ENCODE measurements at regions of chr7 and their contacts with region 1.

Region 1: DNA sequence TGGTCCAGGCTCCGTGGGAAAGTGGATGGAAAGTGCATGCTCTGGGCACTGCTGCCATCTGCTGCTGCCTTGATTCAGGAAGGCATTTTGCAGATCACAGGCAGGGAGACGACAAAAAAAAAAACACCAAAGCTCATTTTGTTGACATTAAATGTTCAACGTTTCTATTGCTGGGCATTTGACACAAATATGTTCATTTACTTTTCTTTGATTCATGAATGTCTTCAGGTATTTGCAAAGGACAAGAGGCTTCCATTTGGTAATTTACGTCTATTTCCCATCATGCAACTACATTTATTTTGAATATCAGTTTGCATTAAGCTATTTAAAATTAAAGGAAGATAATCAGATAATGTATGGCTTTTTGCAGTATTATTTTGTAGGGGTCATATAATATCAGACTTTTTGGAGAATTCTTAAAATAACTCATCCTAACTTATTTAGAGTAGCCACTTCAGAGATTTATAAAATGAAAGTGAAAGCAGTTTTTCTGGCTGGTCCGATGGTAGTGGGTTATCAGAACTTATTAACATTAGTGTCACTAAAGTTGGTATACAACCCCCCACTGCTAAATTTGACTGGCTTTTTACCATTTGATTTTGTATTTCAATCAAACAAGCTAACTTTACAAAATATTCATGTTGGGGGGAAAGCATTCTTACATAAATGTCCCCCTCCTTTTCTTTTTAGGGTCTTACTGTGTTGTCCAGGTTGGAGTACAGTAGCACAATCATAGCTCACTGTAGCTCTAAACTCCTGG is 65.3 kb downstream of the PDIA4 start:
- DNase-seq: peak; percentile 62
- H3K4me3 ChIP-seq: peak overlapping the region; percentile 75
- H3K27ac ChIP-seq: peak overlapping the region; percentile 84
- H3K4me1 ChIP-seq: peaks cover 32% of the 10 kb centered on the region
- H3K27me3 ChIP-seq: peaks cover 9% of the 10 kb centered on the region
- CTCF ChIP-seq: peak; percentile 80

Region 2: DNA sequence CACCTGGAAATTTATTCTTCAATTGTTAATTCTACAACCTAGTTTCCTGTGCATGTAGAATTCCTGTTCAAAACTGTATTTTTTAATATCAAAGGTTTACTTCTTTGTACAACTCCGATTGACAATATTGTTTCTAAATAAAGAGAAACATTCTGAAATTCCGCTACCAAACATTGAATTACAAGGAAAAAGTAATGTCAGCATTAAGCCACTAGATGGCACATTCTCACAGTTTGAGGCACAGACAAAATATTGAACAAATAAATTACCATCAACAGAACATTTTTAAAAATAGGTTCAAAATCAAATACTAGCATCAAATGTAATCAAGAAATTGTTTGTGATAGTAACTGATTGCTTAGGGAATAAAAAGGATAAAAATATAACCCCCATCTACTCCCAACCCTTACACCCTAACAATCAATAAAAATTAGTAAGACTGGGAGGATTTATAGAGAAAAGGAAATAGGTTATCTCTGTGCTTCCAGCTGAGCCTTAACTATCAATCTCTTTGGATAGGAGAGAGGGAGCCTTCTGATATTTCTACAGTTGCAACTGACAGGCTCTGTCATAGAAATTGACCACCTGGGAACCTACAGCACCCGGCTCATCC is 459.0 kb before region 1 on chr7:
- intact Hi-C with region 1: loop called (anchors 5 kb)
- DNase-seq: no peak
- H3K4me3 ChIP-seq: no peak overlapping the region
- H3K27ac ChIP-seq: no peak overlapping the region
- H3K4me1 ChIP-seq: no peaks in the 10 kb centered on the region
- H3K27me3 ChIP-seq: peaks cover 36% of the 10 kb centered on the region
- CTCF ChIP-seq: peak; percentile 81

Region 3: GRCh38 chr7:148575640-148576411 is 387.2 kb before region 1 on chr7:
- intact Hi-C with region 1: loop called (anchors 10 kb)
- DNase-seq: peak; percentile 63
- H3K4me3 ChIP-seq: no peak overlapping the region
- H3K27ac ChIP-seq: no peak overlapping the region
- H3K4me1 ChIP-seq: peaks cover 4% of the 10 kb centered on the region
- H3K27me3 ChIP-seq: no peaks in the 10 kb centered on the region
- CTCF ChIP-seq: peak; percentile 87

Measured in left ventricle myocardium inferior (tissue), 1 donor.